ENCODE measurements at regions of chr17 and their contacts with region 1.

Region 1: DNA sequence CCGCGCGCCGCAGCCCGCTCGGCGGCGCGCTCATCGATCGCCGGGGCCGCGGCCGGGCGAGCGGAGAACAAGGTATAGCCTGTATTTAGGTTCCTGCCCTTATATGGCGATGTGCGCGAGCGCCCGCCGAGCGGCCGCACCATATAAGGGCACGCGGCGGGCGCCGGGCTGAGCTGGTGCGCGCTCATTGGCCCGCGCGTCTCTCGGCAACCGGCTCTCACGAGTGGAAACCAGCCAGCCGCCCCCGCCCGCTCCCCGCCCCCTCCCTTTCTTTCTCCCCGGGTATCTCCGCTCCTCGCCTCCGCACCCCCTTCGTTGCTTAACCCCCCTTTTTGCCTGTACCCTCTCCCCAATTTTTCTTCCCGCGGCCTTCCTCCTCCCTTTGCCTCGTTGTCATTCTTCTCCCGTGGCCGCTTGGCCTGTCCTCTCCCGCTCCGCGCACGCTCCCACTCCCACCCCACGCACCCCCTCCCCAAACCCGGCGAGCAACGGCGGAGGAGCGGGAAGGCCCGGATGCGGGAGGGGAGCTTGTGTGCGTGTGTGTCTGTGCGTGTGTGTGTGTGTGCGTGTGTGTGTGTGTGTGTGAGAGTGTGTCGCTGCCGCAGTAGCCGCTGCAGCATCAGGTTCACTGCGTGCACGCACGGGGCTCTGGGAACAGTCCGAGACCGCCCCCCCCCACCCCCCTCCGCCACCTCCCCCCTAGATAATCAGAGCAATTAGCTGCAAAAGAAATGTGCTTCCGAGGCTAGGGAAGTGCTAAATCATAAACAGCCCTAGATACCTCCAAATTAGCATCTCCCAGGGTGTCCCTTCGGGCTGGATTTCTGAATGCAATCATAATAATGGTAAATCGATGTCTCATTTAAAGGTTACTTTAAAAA is 13.5 kb upstream of the CBX8 start:
- ATAC-seq: peak; percentile 80 to 91 (median 82)
- H3K4me3 ChIP-seq: peak overlapping the region; percentile 30 to 48 (median 43)
- H3K27ac ChIP-seq: peak overlapping the region; percentile 96 to 98
- H3K4me1 ChIP-seq: peaks cover 50 to 52% of the 10 kb centered on the region in 2 donors

Region 2: DNA sequence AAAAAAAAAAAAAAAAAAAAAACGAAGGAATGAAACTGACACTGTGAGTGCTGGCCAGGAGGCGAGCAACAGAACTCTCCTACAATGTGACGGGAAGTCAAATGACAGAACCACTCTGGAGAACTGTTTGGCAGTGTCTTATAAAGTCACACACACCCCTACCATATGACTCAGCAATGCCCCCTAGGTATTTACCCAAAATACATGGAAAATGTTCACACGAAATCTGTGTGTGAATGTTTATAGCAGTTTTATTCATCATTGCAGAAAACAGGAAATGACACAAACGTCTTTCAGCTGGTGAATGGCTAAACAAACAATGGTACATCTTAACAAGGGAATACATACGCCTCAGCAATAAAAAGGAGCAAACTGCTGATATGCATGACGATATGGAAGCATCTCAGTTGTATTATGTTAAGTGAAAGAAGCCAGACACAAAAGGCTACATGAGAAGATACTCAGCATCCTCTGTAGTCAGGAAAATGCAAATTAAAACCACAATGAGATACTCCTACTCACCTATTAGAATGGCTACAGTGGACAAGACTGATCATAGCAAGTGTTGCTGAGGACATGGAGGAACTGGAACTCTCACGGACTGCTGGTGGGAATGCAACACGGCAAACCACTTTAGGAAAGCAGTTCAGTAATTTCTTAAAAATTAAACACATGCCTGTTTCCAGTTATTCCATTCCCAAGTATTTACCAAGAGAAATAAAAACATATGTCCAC is 150.6 kb after region 1 on chr17:
- in situ Hi-C with region 1: no loop called
- ATAC-seq: peak in 3 of 8 experiments; percentile 28 to 85 (median 29)
- H3K4me3 ChIP-seq: no peak overlapping the region
- H3K27ac ChIP-seq: no peak overlapping the region
- H3K4me1 ChIP-seq: peaks cover 0 to 6% of the 10 kb centered on the region in 2 donors

Region 3: GRCh38 chr17:79991140-79991923 is 181.0 kb after region 1 on chr17:
- in situ Hi-C with region 1: loop called in 3 of 9 experiments (anchors 25 kb)
- ATAC-seq: peak; percentile 64 to 97 (median 66)
- H3K4me3 ChIP-seq: peak overlapping the region; percentile 6 to 24 (median 18)
- H3K27ac ChIP-seq: peak overlapping the region; percentile 95 to 96
- H3K4me1 ChIP-seq: peaks cover 47 to 60% of the 10 kb centered on the region in 2 donors

Region 4: DNA sequence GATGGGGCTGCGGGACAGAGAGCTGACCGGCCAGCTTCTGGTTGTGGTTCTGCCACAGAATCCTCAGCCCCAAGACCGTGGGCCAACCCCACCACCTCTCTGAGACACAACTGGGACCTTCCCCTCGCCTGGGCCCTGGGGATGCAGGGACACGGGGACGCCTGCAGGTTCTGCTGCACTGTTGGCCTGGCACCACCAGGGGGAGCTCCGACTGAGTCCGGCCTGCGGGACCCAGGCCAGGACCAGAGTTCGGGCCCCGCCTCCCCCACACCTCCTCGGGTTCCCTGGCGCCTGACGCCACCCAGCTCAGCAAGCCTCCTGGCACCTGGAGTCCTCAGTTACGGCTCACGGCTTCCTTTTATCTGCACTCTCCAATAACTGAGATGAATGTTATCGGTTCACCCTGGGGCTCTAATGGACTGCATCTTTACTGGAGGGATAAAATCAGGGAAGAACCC is 198.0 kb after region 1 on chr17:
- in situ Hi-C with region 1: no loop called
- ATAC-seq: peak; percentile 41 to 93 (median 55)
- H3K4me3 ChIP-seq: no peak overlapping the region
- H3K27ac ChIP-seq: no peak overlapping the region
- H3K4me1 ChIP-seq: peaks cover 11 to 18% of the 10 kb centered on the region in 2 donors